Endothelial cell of umbilical vein (primary cell): ENCODE measurements at regions of chr9 and their contacts with region 1.

Region 1: DNA sequence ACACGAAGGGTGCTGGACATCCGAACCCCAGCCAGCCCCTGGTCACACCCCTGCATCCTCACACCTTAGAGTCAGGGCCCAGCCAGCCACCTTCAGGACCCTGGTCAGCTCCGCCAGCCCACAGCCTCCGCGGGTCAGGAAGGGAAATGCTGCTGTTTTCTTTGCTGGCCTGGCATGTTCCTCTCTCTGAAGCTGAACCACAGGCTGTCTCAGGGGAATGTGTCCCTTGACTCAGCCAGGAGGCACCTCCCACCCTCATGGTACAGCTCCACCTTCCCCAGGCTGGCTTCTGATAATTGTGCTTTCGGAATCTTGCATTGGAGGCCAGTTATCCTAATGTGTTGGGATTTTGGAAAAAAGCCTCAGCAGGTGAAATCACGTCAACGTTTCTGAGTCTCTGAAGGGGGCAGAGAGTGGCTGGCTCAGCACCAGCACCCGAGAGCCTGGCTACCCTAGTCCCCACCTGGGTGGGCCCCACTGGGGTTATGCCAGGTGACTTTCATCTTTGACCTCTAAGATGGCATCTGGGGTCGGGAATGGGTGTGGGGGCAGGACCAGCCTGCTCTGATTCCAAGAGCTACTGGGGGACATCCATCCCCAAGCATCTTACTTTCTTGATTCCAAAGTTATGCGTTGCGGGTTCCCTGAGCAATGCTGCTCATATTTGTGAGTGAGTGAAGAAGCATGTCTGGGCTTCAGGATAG is 9.8 kb upstream of the OLFM1 start:
- DNase-seq: peak; percentile 7
- H3K4me3 ChIP-seq: no peak overlapping the region
- H3K27ac ChIP-seq: no peak overlapping the region
- H3K4me1 ChIP-seq: no peaks in the 10 kb centered on the region
- H3K27me3 ChIP-seq: peaks cover 0 to 9% of the 10 kb centered on the region in 2 experiments
- CTCF ChIP-seq: no peak
- POLR2A ChIP-seq: no peak

Region 2: DNA sequence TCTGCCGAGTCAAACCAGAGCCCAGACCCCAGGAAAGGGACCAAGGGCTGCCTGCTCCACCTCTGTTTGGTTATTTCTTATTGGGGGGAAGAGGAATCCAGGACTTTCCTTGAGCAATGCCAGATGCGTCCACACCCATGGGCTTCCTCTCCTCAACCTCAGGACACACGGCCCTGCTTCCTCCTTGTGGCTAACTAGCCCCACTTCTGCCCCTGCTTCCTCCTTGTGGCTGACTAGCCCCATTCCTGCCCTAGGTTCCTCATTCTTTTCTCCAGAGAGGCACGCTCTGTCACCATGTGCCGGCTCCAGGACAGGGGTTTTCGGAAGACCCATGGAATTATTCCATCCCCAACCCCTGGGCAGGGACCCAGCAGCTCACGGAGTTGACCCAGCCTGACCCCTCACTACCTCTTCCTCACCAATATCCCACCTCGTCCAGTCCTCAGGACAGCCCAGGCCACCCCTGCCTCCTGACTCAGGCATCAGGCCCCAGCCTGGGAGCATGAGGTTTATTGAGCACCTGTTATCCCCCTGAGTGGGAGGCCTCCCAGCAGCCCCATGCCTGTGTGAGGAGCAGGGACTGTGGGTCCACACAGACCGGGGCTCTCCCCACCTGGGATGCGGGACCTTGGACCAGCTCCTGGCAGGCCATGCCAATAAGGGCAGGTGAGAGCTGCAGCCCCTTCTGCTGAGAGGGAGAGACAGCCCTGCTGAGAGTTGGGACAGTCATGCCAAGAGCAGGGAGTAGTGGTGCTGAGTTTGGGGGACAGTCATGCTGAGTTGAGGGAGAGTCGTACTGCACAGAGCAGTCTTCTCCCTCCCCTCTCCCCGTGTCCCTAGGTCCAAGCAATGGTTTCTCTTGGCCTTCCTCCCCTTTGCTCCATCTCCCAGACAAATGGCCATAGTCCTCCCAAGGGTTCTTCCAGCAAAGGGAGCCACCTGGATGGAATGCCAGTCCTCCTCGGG is 148.2 kb before region 1 on chr9:
- CTCF ChIA-PET with region 1: no interaction called
- POLR2A ChIA-PET with region 1: no interaction called
- dilution Hi-C with region 1: no loop called
- intact Hi-C with region 1: no loop called
- DNase-seq: no peak
- H3K4me3 ChIP-seq: no peak overlapping the region
- H3K27ac ChIP-seq: no peak overlapping the region
- H3K4me1 ChIP-seq: no peaks in the 10 kb centered on the region
- H3K27me3 ChIP-seq: no peaks in the 10 kb centered on the region
- CTCF ChIP-seq: no peak
- POLR2A ChIP-seq: no peak

Region 3: DNA sequence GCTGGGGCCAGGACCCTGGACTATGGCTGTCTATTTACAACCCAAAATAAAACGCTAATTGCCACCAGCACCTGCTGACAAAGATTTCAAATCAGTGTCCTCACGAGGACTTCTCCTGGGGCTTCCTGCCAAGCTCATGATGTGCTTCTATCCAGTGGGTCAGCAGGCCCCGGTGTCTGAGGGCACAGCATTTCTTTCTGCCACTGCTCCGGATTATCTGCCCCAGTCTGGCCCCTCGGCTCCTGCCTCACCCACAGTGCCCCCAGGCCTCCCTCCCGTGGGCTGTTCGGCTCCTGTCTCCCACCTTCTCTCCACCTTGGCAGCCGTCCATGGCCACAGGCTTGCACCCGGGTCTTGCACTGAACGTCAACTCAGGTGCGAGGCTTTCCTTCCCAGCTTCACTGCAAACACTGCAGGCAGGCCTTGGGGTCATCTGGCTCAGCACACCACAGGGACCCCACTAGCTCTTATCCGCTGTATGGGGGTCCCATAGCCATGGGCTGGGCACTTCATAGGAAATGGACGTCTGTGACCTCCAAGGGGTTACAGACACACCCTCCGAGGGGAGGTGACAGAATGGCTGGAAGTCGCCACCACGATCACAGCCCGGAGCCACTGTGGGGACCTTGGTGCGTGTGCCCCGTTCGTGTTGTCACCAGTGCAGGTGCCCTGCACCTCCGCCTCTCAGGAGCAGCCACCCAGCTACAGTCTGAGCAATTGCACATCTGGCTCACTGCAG is 116.1 kb before region 1 on chr9:
- CTCF ChIA-PET with region 1: no interaction called
- POLR2A ChIA-PET with region 1: no interaction called
- dilution Hi-C with region 1: no loop called
- intact Hi-C with region 1: no loop called
- DNase-seq: no peak
- H3K4me3 ChIP-seq: no peak overlapping the region
- H3K27ac ChIP-seq: no peak overlapping the region
- H3K4me1 ChIP-seq: no peaks in the 10 kb centered on the region
- H3K27me3 ChIP-seq: no peaks in the 10 kb centered on the region
- CTCF ChIP-seq: no peak
- POLR2A ChIP-seq: no peak

Region 4: GRCh38 chr9:135448663-135449100 is 371.0 kb after region 1 on chr9:
- CTCF ChIA-PET with region 1: no interaction called
- POLR2A ChIA-PET with region 1: interaction called, 10 read pairs
- dilution Hi-C with region 1: no loop called
- intact Hi-C with region 1: no loop called
- DNase-seq: no peak
- H3K4me3 ChIP-seq: no peak overlapping the region
- H3K27ac ChIP-seq: no peak overlapping the region
- H3K4me1 ChIP-seq: no peaks in the 10 kb centered on the region
- H3K27me3 ChIP-seq: no peaks in the 10 kb centered on the region
- CTCF ChIP-seq: no peak
- POLR2A ChIP-seq: no peak